Caco-2 (cell line): ENCODE measurements at regions of chr17 and their contacts with region 1.

Region 1: GRCh38 chr17:67293251-67294203 is 48.5 kb upstream of the HELZ start:
- DNase-seq: peak; percentile 47 to 49
- H3K4me3 ChIP-seq: no peak overlapping the region
- H3K4me3 Mint-ChIP-seq: no peak overlapping the region
- H3K27ac Mint-ChIP-seq: no peak overlapping the region
- H3K4me1 ChIP-seq: peaks cover 8% of the 10 kb centered on the region
- H3K4me1 Mint-ChIP-seq: peaks cover under 1% of the 10 kb centered on the region
- H3K27me3 ChIP-seq: no peaks in the 10 kb centered on the region
- H3K27me3 Mint-ChIP-seq: no peaks in the 10 kb centered on the region
- CTCF ChIP-seq: peak; percentile 48 to 57

Region 2: GRCh38 chr17:67260170-67261011 is 33.1 kb before region 1 on chr17:
- CTCF ChIA-PET with region 1: no interaction called
- POLR2A ChIA-PET with region 1: no interaction called
- intact Hi-C with region 1: loop called (anchors 2 kb)
- DNase-seq: no peak
- H3K4me3 ChIP-seq: no peak overlapping the region
- H3K4me3 Mint-ChIP-seq: no peak overlapping the region
- H3K27ac Mint-ChIP-seq: no peak overlapping the region
- H3K4me1 ChIP-seq: peaks cover 5% of the 10 kb centered on the region; the same call in 1 of the 2 replicates
- H3K4me1 Mint-ChIP-seq: no peaks in the 10 kb centered on the region
- H3K27me3 ChIP-seq: no peaks in the 10 kb centered on the region
- H3K27me3 Mint-ChIP-seq: no peaks in the 10 kb centered on the region
- CTCF ChIP-seq: no peak

Region 3: GRCh38 chr17:67272312-67273050 is 21.0 kb before region 1 on chr17:
- CTCF ChIA-PET with region 1: interaction called, 11 read pairs
- POLR2A ChIA-PET with region 1: no interaction called
- intact Hi-C with region 1: no loop called
- DNase-seq: no peak
- H3K4me3 ChIP-seq: no peak overlapping the region
- H3K4me3 Mint-ChIP-seq: no peak overlapping the region
- H3K27ac Mint-ChIP-seq: no peak overlapping the region
- H3K4me1 ChIP-seq: no peaks in the 10 kb centered on the region
- H3K4me1 Mint-ChIP-seq: no peaks in the 10 kb centered on the region
- H3K27me3 ChIP-seq: no peaks in the 10 kb centered on the region
- H3K27me3 Mint-ChIP-seq: no peaks in the 10 kb centered on the region
- CTCF ChIP-seq: peak in 1 of 2 experiments; percentile 21

Region 4: DNA sequence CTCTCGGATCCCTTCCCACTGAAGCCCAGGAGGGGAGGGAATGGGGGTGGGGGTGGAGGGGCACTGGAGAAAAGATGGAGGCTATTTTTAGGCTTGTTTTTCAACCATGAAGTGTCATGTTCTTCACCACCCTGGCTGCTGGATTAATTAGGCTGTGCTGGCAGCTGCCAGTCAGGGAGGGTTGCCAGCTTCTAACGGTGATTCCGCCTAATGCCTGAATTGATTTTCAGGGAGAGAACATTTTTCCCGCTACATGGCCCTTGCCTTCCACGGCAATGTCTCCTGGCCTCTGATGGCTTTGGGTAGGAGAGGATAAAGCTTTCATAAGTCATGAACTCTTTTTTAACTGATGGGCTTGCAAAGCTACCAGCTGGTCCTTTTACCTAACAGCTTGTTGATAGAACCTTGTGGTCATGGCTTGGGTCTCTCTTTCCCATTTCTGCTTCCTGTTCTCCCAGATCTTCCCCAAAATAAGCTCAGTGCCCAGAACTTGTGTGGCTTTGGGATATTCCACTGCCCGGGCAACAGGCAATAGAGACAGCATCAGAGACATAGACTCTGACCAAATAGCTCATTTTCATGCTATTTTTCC is 250.9 kb after region 1 on chr17:
- CTCF ChIA-PET with region 1: no interaction called
- POLR2A ChIA-PET with region 1: no interaction called
- intact Hi-C with region 1: no loop called
- DNase-seq: no peak
- H3K4me3 ChIP-seq: no peak overlapping the region
- H3K4me3 Mint-ChIP-seq: no peak overlapping the region
- H3K27ac Mint-ChIP-seq: no peak overlapping the region
- H3K4me1 ChIP-seq: no peaks in the 10 kb centered on the region
- H3K4me1 Mint-ChIP-seq: no peaks in the 10 kb centered on the region
- H3K27me3 ChIP-seq: no peaks in the 10 kb centered on the region
- H3K27me3 Mint-ChIP-seq: no peaks in the 10 kb centered on the region
- CTCF ChIP-seq: no peak